CD8-positive, alpha-beta T cell (primary cell): ENCODE measurements at regions of chr6 and their contacts with region 1.

Region 1: GRCh38 chr6:4135665-4136353 is 434 bp upstream of the ECI2 start:
- DNase-seq: peak; percentile 89 to 97 (median 95)
- ATAC-seq: peak; percentile 91
- H3K4me3 ChIP-seq: peak overlapping the region; percentile 75 to 77
- H3K4me3 Mint-ChIP-seq: peak overlapping the region; percentile 80
- H3K27ac ChIP-seq: peak overlapping the region; percentile 44 to 57
- H3K27ac Mint-ChIP-seq: peak overlapping the region; percentile 73
- H3K4me1 ChIP-seq: peaks cover 27% of the 10 kb centered on the region
- H3K4me1 Mint-ChIP-seq: peaks cover 47% of the 10 kb centered on the region
- H3K27me3 ChIP-seq: no peaks in the 10 kb centered on the region
- H3K27me3 Mint-ChIP-seq: no peaks in the 10 kb centered on the region
- CTCF ChIP-seq: no peak

Region 2: DNA sequence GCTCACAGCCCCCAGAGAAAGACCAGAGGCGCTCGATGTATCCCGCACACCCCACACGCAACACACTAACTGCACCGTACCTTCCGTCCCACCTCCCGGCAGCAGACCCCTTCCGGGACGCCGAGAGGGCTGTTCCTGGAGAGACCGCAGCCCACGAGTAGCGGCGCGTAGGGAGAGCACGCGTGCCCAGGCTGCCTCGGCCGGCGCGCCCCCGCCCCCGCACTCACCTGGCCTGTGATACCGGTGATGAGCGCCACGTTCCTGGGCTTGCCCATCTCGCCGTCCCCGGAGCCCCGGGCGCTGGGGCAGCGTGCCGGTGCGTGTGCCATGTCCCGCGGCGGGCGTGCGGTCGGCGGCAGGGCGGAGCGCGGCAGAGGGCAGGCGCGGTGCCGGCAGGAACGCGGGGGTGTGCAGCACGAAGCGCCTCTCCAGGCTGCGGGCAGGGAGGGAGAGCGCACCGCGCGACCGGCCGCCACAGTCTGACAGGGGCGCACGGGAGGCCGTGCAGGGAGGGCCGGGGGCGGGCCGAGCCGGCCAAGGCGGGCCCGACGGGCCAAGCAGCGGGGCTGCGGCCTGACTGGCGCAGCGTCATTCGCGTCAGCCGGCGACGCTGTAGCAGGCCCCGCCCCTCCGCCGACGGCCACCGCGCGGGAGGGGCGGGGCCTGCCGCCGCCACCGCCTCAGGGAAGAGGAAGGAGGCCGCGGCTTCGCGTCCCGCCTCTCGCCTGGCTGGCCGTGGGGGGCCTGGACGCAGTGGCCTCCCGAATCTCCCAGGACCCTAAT is 1890.5 kb before region 1 on chr6 and contains the start of gene GMDS:
- CTCF ChIA-PET with region 1: no interaction called
- POLR2A ChIA-PET with region 1: no interaction called
- intact Hi-C with region 1: loop called in 1 of 2 experiments (anchors 5 kb)
- DNase-seq: peak; percentile 70 to 94 (median 80)
- ATAC-seq: peak; percentile 93
- H3K4me3 ChIP-seq: peak within 1 kb of the TSS; percentile 86 to 90
- H3K4me3 Mint-ChIP-seq: peak within 1 kb of the TSS; percentile 91
- H3K27ac ChIP-seq: peak within 1 kb of the TSS; percentile 81 to 86
- H3K27ac Mint-ChIP-seq: peak within 1 kb of the TSS; percentile 94
- H3K4me1 ChIP-seq: peaks cover 24% of the 10 kb centered on the region
- H3K4me1 Mint-ChIP-seq: peaks cover 61% of the 10 kb centered on the region
- H3K27me3 ChIP-seq: no peaks in the 10 kb centered on the region
- H3K27me3 Mint-ChIP-seq: no peaks in the 10 kb centered on the region
- CTCF ChIP-seq: no peak
- total RNA-seq, gene GMDS: 14.1 to 18.5 TPM

Region 3: GRCh38 chr6:3118353-3119039 is 1017.3 kb before region 1 on chr6 and contains the start of gene BPHL:
- CTCF ChIA-PET with region 1: no interaction called
- POLR2A ChIA-PET with region 1: no interaction called
- intact Hi-C with region 1: loop called (anchors 5 kb)
- DNase-seq: peak; percentile 97 to 100 (median 99)
- ATAC-seq: peak; percentile 95
- H3K4me3 ChIP-seq: peak within 1 kb of the TSS; percentile 63 to 80
- H3K4me3 Mint-ChIP-seq: peak within 1 kb of the TSS; percentile 92
- H3K27ac ChIP-seq: peak within 1 kb of the TSS; percentile 85 to 90
- H3K27ac Mint-ChIP-seq: peak within 1 kb of the TSS; percentile 96
- H3K4me1 ChIP-seq: peaks cover 12% of the 10 kb centered on the region
- H3K4me1 Mint-ChIP-seq: peaks cover 13% of the 10 kb centered on the region
- H3K27me3 ChIP-seq: no peaks in the 10 kb centered on the region
- H3K27me3 Mint-ChIP-seq: no peaks in the 10 kb centered on the region
- CTCF ChIP-seq: no peak
- total RNA-seq, gene BPHL: 3.7 to 5.5 TPM

Region 4: GRCh38 chr6:3356056-3356761 is 779.6 kb before region 1 on chr6:
- CTCF ChIA-PET with region 1: no interaction called
- POLR2A ChIA-PET with region 1: no interaction called
- intact Hi-C with region 1: loop called (anchors 5 kb)
- DNase-seq: peak; percentile 35 to 90 (median 66)
- ATAC-seq: peak; percentile 87
- H3K4me3 ChIP-seq: peak overlapping the region; percentile 51 to 58
- H3K4me3 Mint-ChIP-seq: peak overlapping the region; percentile 81
- H3K27ac ChIP-seq: peak overlapping the region; percentile 48 to 79
- H3K27ac Mint-ChIP-seq: peak overlapping the region; percentile 90
- H3K4me1 ChIP-seq: peaks cover 27% of the 10 kb centered on the region
- H3K4me1 Mint-ChIP-seq: peaks cover 33% of the 10 kb centered on the region
- H3K27me3 ChIP-seq: no peaks in the 10 kb centered on the region
- H3K27me3 Mint-ChIP-seq: no peaks in the 10 kb centered on the region
- CTCF ChIP-seq: no peak

Region 5: DNA sequence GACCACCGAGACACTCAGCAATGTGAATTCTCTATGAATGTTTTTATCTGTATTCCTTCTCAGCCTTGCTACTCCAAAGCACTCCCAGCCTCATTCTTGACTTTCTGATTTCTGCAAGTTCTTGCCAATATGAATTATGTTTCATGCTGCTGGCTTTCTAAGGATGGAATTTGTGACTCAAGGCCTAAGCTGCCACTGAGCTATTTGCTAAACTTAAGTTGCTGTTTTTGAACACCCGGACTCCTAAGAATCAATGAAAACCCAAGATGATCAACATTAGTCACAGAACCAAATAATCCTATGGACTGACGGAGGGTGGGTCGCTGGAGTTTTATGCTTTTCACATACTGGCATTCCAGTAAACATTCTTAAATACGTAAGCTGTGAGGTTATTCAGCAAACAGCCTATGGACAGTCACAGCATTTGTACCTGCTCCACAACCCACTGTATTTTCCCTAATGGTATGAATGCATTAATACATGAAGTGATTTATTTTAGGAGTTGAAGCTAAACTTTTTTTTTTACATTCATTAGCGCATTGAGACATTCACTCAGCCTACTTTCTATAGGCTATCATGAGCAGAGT is 376.1 kb before region 1 on chr6:
- CTCF ChIA-PET with region 1: no interaction called
- POLR2A ChIA-PET with region 1: no interaction called
- intact Hi-C with region 1: no loop called
- DNase-seq: no peak
- ATAC-seq: no peak
- H3K4me3 ChIP-seq: no peak overlapping the region
- H3K4me3 Mint-ChIP-seq: no peak overlapping the region
- H3K27ac ChIP-seq: no peak overlapping the region
- H3K27ac Mint-ChIP-seq: no peak overlapping the region
- H3K4me1 ChIP-seq: no peaks in the 10 kb centered on the region
- H3K4me1 Mint-ChIP-seq: no peaks in the 10 kb centered on the region
- H3K27me3 ChIP-seq: no peaks in the 10 kb centered on the region
- H3K27me3 Mint-ChIP-seq: peaks cover 1% of the 10 kb centered on the region
- CTCF ChIP-seq: no peak

Region 6: GRCh38 chr6:3848925-3849605 is 286.7 kb before region 1 on chr6 and contains the start of gene FAM50B:
- CTCF ChIA-PET with region 1: no interaction called
- POLR2A ChIA-PET with region 1: interaction called, 8 read pairs
- intact Hi-C with region 1: loop called (anchors 5 to 10 kb)
- DNase-seq: peak; percentile 81 to 94 (median 90)
- ATAC-seq: peak; percentile 95
- H3K4me3 ChIP-seq: peak within 1 kb of the TSS; percentile 54 to 63
- H3K4me3 Mint-ChIP-seq: peak within 1 kb of the TSS; percentile 80
- H3K27ac ChIP-seq: peak within 1 kb of the TSS; percentile 47 to 56
- H3K27ac Mint-ChIP-seq: peak within 1 kb of the TSS; percentile 84
- H3K4me1 ChIP-seq: peaks cover 6% of the 10 kb centered on the region
- H3K4me1 Mint-ChIP-seq: peaks cover 18% of the 10 kb centered on the region
- H3K27me3 ChIP-seq: no peaks in the 10 kb centered on the region
- H3K27me3 Mint-ChIP-seq: no peaks in the 10 kb centered on the region
- CTCF ChIP-seq: peak; percentile 75
- total RNA-seq, gene FAM50B: 0.97 to 1.1 TPM

Region 7: GRCh38 chr6:4105980-4106536 is 29.8 kb before region 1 on chr6:
- CTCF ChIA-PET with region 1: no interaction called
- POLR2A ChIA-PET with region 1: no interaction called
- intact Hi-C with region 1: no loop called
- DNase-seq: no peak
- ATAC-seq: no peak
- H3K4me3 ChIP-seq: no peak overlapping the region
- H3K4me3 Mint-ChIP-seq: no peak overlapping the region
- H3K27ac ChIP-seq: no peak overlapping the region
- H3K27ac Mint-ChIP-seq: no peak overlapping the region
- H3K4me1 ChIP-seq: no peaks in the 10 kb centered on the region
- H3K4me1 Mint-ChIP-seq: no peaks in the 10 kb centered on the region
- H3K27me3 ChIP-seq: no peaks in the 10 kb centered on the region
- H3K27me3 Mint-ChIP-seq: peaks cover 2% of the 10 kb centered on the region
- CTCF ChIP-seq: no peak

Region 8: DNA sequence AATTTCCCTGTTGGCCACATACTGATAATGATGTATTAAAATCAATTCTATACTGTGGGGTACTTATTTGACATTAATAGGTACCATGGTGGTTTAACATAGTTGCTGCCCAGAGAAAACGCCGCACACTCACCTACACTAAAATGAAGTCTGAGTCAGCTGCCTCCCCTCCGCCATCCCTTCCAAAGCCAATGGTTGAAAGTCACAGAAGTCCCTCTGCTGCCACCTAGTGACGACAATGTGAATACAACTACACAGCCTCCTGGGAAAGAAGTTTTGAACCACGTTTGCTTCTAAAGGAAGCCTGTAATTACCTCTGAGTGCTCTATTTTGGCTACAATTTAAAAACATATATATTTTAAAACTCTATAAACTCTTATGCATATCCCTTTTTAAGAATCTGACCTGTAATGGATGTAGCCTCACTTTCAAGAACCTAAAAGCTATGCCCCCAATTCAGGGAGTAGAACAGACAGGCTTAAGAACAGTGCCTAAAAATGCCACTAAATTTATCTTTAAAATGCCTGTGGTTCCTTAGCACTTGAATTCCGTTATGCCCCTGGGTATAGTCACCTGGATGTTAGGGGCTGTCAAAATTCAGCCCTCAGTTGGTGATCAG is 20.1 kb after region 1 on chr6:
- CTCF ChIA-PET with region 1: interaction called, 31 read pairs
- POLR2A ChIA-PET with region 1: interaction called, 4 read pairs
- intact Hi-C with region 1: loop called (anchors 1 to 2 kb)
- DNase-seq: peak; percentile 53 to 88 (median 77)
- ATAC-seq: peak; percentile 99
- H3K4me3 ChIP-seq: no peak overlapping the region
- H3K4me3 Mint-ChIP-seq: no peak overlapping the region
- H3K27ac ChIP-seq: no peak overlapping the region
- H3K27ac Mint-ChIP-seq: no peak overlapping the region
- H3K4me1 ChIP-seq: no peaks in the 10 kb centered on the region
- H3K4me1 Mint-ChIP-seq: peaks cover 3% of the 10 kb centered on the region
- H3K27me3 ChIP-seq: no peaks in the 10 kb centered on the region
- H3K27me3 Mint-ChIP-seq: peaks cover 4% of the 10 kb centered on the region
- CTCF ChIP-seq: peak; percentile 92

Region 9: DNA sequence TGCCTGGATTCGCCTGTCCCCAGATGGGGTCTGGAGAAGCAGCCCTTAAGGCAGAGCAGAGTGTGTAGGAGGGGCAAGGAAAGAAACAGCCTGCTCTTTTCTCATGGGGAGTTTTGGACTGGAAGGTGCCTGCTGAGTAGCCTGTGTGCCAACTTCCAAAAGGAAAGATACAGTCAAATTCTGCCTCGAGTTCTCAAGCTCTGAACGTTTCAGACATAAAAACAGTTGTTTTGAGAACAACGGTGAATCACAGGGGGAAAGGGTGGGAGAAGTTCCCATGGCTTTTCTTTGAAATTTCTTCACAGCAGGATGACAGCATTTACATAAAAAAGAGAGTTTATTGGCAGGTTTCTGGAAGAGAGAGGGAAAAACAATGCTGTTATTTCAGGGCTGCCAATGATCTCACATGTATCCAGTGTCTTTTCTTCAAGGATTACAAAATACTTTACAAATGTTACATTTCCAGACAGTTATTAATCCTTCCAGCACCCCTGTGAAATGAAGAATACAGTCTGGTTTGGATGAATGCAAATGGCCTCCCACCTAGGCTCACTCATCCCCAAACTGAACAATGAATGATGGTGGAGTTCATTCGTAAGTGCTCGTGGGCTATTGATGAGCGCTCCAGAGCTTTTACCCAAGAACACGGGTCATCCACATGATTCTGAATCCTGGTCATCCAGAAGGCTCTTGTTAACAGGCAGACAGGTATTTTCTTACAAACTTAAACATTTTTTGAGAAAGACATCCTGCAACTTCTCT is 33.4 kb after region 1 on chr6:
- CTCF ChIA-PET with region 1: no interaction called
- POLR2A ChIA-PET with region 1: no interaction called
- intact Hi-C with region 1: no loop called
- DNase-seq: no peak
- ATAC-seq: no peak
- H3K4me3 ChIP-seq: no peak overlapping the region
- H3K4me3 Mint-ChIP-seq: no peak overlapping the region
- H3K27ac ChIP-seq: no peak overlapping the region
- H3K27ac Mint-ChIP-seq: no peak overlapping the region
- H3K4me1 ChIP-seq: no peaks in the 10 kb centered on the region
- H3K4me1 Mint-ChIP-seq: no peaks in the 10 kb centered on the region
- H3K27me3 ChIP-seq: no peaks in the 10 kb centered on the region
- H3K27me3 Mint-ChIP-seq: peaks cover 7% of the 10 kb centered on the region
- CTCF ChIP-seq: no peak

Region 10: GRCh38 chr6:5260661-5261544 is 1125.1 kb after region 1 on chr6 and contains the starts of genes FARS2 and LYRM4:
- CTCF ChIA-PET with region 1: no interaction called
- POLR2A ChIA-PET with region 1: no interaction called
- intact Hi-C with region 1: loop called (anchors 2 to 5 kb)
- DNase-seq: peak; percentile 86 to 98 (median 92)
- ATAC-seq: peak; percentile 82
- H3K4me3 ChIP-seq: peak within 1 kb of the TSS; percentile 93
- H3K4me3 Mint-ChIP-seq: peak within 1 kb of the TSS; percentile 98
- H3K27ac ChIP-seq: peak within 1 kb of the TSS; percentile 97 to 99
- H3K27ac Mint-ChIP-seq: peak within 1 kb of the TSS; percentile 100
- H3K4me1 ChIP-seq: peaks cover 17% of the 10 kb centered on the region
- H3K4me1 Mint-ChIP-seq: peaks cover 37% of the 10 kb centered on the region
- H3K27me3 ChIP-seq: no peaks in the 10 kb centered on the region
- H3K27me3 Mint-ChIP-seq: no peaks in the 10 kb centered on the region
- CTCF ChIP-seq: no peak
- total RNA-seq, gene FARS2: 9.1 to 10.5 TPM
- total RNA-seq, gene LYRM4: 23.4 to 24.3 TPM